Transverse colon (tissue), 4 donors: ENCODE measurements at regions of chr10 and their contacts with region 1.

Region 1: DNA sequence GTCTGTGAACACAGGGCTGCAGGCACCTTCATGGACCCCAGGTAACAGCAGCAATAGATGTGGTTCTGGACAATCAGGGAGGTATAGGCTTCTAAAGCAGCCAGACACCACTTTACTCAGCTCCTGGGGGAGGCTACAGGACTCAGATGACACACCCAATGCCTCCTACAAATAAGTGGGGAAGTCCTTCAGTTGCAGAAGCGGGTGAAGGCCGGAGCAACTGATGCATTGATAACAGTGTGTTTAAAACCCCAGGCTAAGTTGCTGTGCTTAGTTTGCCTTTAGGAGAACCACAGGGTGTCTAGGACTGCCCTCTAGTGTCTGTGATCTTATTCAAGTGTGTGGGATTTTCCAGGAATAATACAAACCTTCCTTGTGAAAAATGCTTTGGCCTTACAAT is 5.9 kb upstream of the ITGA8 start:
- DNase-seq: peak; percentile 12
- H3K4me3 ChIP-seq: no peak overlapping the region
- H3K27ac ChIP-seq: no peak overlapping the region
- H3K4me1 ChIP-seq: peaks cover 0 to 3% (median 0%) of the 10 kb centered on the region in 4 donors
- H3K27me3 ChIP-seq: peaks cover 10% of the 10 kb centered on the region
- CTCF ChIP-seq: peak; percentile 21 to 43 (median 39)
- EP300 ChIP-seq: no peak
- POLR2A ChIP-seq: no peak

Region 2: DNA sequence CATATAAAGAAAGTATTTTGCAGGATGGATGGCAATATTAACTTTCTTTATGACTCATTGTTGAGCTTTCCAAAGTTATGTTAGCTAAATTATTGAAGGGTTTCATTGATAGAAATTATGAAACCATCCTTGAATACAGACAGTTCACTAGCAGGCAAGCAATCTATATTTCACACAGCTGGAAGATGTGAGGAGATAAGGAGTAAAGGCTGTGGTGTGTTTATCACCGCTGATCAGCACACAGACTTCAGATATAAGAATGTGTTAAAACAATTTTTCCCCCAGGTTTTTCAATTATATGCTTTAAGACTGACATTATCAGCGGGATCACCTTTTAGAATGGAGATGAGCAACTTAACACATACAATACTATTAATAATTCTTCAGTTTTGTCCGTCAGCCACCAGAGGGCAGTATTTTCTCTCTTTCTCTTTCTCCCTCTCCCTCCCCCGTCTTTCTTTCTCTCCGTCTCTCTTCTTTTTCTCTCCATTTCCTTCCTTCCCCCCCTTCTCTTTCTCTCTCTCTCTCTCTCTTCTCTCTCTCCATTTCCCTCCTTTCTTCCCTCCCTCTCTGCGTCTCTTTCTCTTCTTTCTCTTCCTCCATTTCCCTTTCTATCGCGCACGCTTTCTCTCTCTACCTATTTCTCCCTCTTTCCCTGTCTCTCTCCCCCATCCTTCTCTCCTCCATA is 291.6 kb before region 1 on chr10:
- in situ Hi-C with region 1: loop called (anchors 10 to 25 kb)
- intact Hi-C with region 1: no loop called
- DNase-seq: no peak
- H3K4me3 ChIP-seq: peak overlapping the region in 2 of 4 donors; percentile 15 to 43
- H3K27ac ChIP-seq: no peak overlapping the region
- H3K4me1 ChIP-seq: no peaks in the 10 kb centered on the region
- H3K27me3 ChIP-seq: no peaks in the 10 kb centered on the region
- CTCF ChIP-seq: peak; percentile 71 to 79 (median 74)
- EP300 ChIP-seq: no peak
- POLR2A ChIP-seq: no peak

Region 3: GRCh38 chr10:15585303-15585715 is 140.3 kb before region 1 on chr10:
- in situ Hi-C with region 1: loop called in 1 of 4 experiments (anchors 10 kb)
- intact Hi-C with region 1: no loop called
- DNase-seq: peak; percentile 70
- H3K4me3 ChIP-seq: no peak overlapping the region
- H3K27ac ChIP-seq: no peak overlapping the region
- H3K4me1 ChIP-seq: no peaks in the 10 kb centered on the region
- H3K27me3 ChIP-seq: peaks cover 2% of the 10 kb centered on the region
- CTCF ChIP-seq: peak; percentile 40 to 74 (median 60)
- EP300 ChIP-seq: no peak
- POLR2A ChIP-seq: no peak